ENCODE measurements at regions of chr6 and their contacts with region 1.

Region 1: GRCh38 chr6:43575772-43576551 is at the starts of genes POLH and XPO5:
- DNase-seq: peak; percentile 90
- H3K4me3 Mint-ChIP-seq: peak within 1 kb of the TSS; percentile 91
- H3K27ac Mint-ChIP-seq: peak within 1 kb of the TSS; percentile 86
- H3K4me1 Mint-ChIP-seq: peaks cover 43% of the 10 kb centered on the region
- H3K27me3 Mint-ChIP-seq: no peaks in the 10 kb centered on the region
- total RNA-seq, gene POLH: 35.7 and 39.1 TPM in 2 replicates
- total RNA-seq, gene XPO5: 135 and 149 TPM in 2 replicates

Region 2: DNA sequence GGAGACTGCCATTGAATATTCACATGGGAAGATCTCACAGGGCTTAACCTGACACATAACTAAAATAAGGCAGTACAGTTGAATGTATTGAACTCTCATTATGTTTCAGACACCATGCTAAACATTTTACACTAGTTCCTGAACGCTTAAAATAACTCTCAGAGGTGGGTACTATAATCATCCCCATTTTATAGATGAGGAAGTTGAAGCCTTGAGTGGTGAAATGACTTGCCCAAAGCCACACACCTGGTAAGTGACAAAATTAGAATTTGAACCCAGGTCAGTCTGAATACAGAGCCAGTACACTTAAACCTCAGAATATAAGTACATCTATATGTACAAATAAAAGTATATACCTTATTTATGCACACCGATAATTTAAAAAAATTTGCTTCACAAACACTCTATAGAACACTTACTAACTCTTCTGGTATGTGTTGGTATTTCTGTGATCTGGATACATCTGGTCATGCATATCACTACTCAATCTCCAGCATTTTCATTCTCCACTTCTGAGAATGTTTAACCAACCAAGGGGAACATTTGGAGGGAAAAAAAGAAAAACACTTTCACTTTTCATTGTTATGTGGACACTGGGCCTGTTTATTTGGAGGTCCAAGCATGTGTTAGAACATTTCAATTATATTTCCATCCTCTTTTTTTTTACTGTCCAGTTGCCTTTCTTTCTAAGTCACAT is 798.7 kb before region 1 on chr6:
- intact Hi-C with region 1: loop called (anchors 10 kb)
- DNase-seq: no peak
- H3K4me3 Mint-ChIP-seq: no peak overlapping the region
- H3K27ac Mint-ChIP-seq: peak overlapping the region; percentile 57
- H3K4me1 Mint-ChIP-seq: peaks cover 68% of the 10 kb centered on the region
- H3K27me3 Mint-ChIP-seq: no peaks in the 10 kb centered on the region

Region 3: DNA sequence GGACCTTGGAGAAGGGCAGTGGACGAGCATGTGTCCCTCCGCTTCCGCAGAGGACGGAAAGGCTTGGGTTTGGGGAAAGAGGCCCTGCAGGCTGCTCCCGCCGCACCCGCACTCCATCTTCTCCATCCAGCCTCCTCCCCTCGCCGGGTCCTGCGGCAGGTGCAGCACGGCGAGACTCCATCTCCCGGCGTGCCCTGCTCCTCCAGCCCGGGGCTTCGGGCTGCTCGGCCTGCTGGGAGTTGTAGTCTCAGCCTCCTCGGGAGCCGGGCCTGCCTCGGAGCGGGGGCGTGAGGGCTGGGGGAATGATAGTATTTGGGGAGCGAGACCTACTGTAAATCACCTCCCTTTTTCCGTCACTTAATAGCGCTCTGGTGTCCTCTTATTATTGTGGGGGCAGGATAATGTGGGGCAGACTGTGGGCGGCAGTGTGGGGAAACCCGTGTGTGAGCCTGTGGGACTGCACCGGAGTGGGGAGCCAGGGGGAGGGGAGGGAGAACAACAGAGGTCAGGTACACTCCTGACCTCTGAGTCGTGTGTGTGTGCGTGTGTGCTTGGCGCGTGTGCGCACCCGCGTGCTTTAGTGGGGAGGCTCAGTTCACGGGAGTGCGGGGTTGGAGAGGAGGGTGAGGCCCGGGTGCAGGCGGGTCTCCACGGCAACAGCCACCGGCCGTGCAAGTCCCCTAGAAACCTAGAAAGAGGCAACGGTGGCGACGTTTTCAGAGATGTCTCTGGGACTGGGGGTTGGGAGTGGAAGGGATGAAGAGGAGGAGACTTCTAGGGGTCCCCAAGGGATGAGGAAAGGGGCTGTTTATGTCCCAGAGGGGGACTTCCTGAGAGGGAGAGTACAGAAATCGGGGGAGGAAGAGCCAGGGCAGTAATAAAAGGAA is 328.6 kb before region 1 on chr6:
- intact Hi-C with region 1: loop called (anchors 10 kb)
- DNase-seq: peak; percentile 77
- H3K4me3 Mint-ChIP-seq: peak overlapping the region; percentile 77
- H3K27ac Mint-ChIP-seq: peak overlapping the region; percentile 85
- H3K4me1 Mint-ChIP-seq: peaks cover 21% of the 10 kb centered on the region
- H3K27me3 Mint-ChIP-seq: peaks cover 17% of the 10 kb centered on the region